A673 (cell line): ENCODE measurements at regions of chr1 and their contacts with region 1.

Region 1: GRCh38 chr1:165928075-165928731 is 100.8 kb downstream of the UCK2 start:
- DNase-seq: peak; percentile 77
- H3K4me3 ChIP-seq: no peak overlapping the region
- H3K27ac ChIP-seq: no peak overlapping the region
- H3K4me1 ChIP-seq: no peaks in the 10 kb centered on the region
- H3K27me3 ChIP-seq: no peaks in the 10 kb centered on the region
- CTCF ChIP-seq: peak; percentile 81

Region 2: DNA sequence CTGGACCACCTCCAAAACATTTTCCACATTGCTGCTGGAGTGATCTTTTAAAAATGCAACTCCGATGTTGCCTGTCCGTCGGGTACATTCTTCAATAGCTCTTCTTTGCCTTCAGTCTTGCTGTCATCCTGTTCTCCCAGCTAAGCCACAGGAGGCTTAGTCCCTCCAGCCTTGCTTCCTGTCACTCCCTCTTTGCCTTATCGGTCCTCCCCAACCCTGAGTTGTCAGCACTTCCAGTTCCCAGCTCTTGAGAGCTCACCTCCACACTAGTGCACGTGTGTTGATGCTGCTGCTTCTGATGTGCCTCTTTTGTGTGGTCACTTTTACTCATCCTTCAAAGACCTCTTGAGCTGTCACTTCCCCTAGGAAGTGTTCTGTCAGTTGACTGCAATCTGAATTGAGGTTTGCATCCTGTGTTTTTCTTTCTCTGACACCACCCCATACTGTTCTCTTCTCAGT is 85.5 kb before region 1 on chr1:
- CTCF ChIA-PET with region 1: interaction called, 15 read pairs
- POLR2A ChIA-PET with region 1: no interaction called
- intact Hi-C with region 1: no loop called
- DNase-seq: peak; percentile 48
- H3K4me3 ChIP-seq: no peak overlapping the region
- H3K27ac ChIP-seq: peak overlapping the region; percentile 6
- H3K4me1 ChIP-seq: peaks cover 21% of the 10 kb centered on the region
- H3K27me3 ChIP-seq: no peaks in the 10 kb centered on the region
- CTCF ChIP-seq: no peak

Region 3: GRCh38 chr1:165914136-165914798 is 13.9 kb before region 1 on chr1:
- CTCF ChIA-PET with region 1: no interaction called
- POLR2A ChIA-PET with region 1: no interaction called
- intact Hi-C with region 1: no loop called
- DNase-seq: peak; percentile 79
- H3K4me3 ChIP-seq: no peak overlapping the region
- H3K27ac ChIP-seq: no peak overlapping the region
- H3K4me1 ChIP-seq: no peaks in the 10 kb centered on the region
- H3K27me3 ChIP-seq: no peaks in the 10 kb centered on the region
- CTCF ChIP-seq: peak; percentile 90

Region 4: DNA sequence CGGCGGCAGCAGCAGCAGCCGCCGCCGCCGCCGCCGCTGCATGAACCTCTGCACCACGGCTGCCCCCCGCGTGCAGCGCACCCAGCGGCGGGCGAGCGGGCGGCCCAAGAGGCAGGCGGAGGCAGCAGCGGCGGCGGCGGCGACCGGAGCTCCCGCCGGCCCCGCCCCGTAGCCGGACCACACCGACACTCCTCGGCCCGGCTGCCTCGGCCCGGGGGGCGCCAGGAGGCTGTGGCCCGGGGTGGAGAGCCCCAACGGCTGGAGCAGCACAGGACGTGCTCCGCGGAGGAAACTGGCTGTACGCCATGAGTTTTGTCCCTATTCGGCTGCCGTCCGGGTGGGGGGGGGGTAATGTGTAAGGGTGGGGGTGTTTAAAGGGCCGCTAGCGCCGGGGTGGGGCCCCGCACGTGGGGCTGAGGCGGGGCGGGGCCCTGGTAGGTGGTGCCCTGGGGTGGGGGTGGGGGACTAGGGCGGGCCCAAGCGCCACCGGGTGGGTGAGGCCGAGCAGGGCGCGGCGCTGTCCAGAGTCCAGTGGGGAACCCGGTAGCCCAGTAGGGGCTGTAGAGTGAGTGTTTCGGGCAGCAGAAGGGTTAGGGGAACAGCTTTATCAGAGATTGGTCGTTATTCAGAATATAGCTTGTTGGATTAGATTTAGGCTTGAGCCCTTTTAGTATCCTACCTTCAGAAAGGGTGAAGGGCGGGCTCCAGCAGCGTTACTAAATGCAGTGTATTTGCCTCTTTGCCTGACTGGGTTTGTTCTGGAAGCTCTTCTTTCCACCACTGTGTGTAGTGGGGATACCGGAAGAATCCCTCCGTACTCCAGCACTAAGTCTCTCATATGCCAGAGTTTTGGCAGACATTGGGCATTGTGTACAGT is 238.7 kb after region 1 on chr1 and contains the start of gene FAM78B:
- CTCF ChIA-PET with region 1: interaction called, 4 read pairs
- POLR2A ChIA-PET with region 1: no interaction called
- intact Hi-C with region 1: loop called (anchors 10 kb)
- DNase-seq: peak; percentile 79
- H3K4me3 ChIP-seq: peak within 1 kb of the TSS; percentile 58
- H3K27ac ChIP-seq: no peak within 1 kb of the TSS
- H3K4me1 ChIP-seq: peaks cover 12% of the 10 kb centered on the region
- H3K27me3 ChIP-seq: peaks cover 65% of the 10 kb centered on the region
- CTCF ChIP-seq: no peak; the same call in 1 of the 2 replicates
- total RNA-seq, gene FAM78B: 0.24 and 0.50 TPM in 2 replicates

Region 5: GRCh38 chr1:166432655-166433054 is 504.5 kb after region 1 on chr1:
- CTCF ChIA-PET with region 1: no interaction called
- POLR2A ChIA-PET with region 1: no interaction called
- intact Hi-C with region 1: loop called (anchors 1 kb)
- DNase-seq: no peak
- H3K4me3 ChIP-seq: no peak overlapping the region
- H3K27ac ChIP-seq: no peak overlapping the region
- H3K4me1 ChIP-seq: no peaks in the 10 kb centered on the region
- H3K27me3 ChIP-seq: no peaks in the 10 kb centered on the region
- CTCF ChIP-seq: no peak

Region 6: DNA sequence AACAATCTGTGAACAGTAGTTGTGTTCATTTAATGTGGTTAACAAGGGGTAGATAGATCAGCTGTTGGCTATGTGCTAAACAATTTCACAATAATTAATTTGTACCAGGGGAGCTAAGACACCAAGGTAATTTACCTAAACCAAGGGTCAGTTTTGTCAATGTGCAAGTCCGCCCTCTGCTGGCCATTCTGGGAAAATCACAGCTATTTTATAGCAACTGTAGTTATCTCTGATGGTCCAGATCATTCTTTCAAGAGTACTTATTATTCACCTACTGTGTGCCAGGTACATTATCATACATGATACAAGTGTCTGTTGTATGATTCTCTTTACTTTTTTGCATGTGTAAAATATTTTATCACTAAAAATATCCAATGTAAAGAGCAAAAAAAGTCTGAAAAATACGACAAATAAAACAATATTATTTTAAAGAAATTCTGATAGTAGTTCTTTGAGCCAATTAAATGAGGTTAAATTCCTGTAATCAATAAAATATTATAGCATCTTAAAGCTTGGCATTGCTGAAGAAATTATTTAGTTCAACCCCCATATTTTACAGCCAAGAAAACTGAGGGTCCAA is 550.9 kb after region 1 on chr1:
- CTCF ChIA-PET with region 1: interaction called, 14 read pairs
- POLR2A ChIA-PET with region 1: no interaction called
- intact Hi-C with region 1: loop called (anchors 1 kb)
- DNase-seq: peak; percentile 41
- H3K4me3 ChIP-seq: no peak overlapping the region
- H3K27ac ChIP-seq: no peak overlapping the region
- H3K4me1 ChIP-seq: no peaks in the 10 kb centered on the region
- H3K27me3 ChIP-seq: peaks cover 17% of the 10 kb centered on the region
- CTCF ChIP-seq: peak; percentile 86

Region 7: DNA sequence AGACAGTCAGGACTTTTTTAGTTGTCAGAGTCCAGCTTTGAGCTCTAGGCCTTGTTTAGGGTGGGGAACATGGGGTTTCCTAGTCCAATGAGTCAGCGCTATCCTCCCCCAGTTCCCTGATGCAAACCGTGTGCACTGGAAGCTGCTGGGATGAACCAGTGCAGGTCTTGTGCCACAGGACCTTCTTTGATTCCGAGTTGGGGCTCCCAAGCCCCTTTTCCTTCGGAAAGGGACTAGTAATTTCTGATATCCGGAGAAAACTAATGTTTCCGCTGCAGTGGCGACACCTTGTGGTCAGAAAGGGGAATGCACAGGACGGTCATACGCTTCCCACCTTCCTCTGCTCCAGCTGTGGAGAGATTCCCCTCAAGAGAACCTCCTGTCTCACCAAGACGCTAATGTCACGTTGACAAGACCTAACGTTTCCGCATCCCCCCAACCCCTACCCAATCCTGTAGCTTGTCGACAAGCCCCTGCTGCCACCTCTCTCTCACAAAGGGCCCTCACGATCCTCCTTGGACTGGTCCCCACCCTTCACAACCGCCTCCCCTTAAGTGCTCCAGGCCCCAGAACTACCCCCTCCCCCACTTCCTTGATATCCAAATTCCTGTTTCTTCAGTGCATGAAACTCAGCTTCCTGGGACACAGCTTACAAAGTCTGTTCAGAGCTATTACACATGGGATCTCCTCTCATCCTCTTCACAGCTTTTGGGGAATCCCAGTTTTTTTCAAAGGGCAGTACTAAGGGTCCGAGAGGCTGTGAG is 1131.0 kb after region 1 on chr1:
- CTCF ChIA-PET with region 1: no interaction called
- POLR2A ChIA-PET with region 1: no interaction called
- intact Hi-C with region 1: loop called (anchors 5 kb)
- DNase-seq: peak; percentile 84
- H3K4me3 ChIP-seq: no peak overlapping the region
- H3K27ac ChIP-seq: no peak overlapping the region
- H3K4me1 ChIP-seq: no peaks in the 10 kb centered on the region
- H3K27me3 ChIP-seq: no peaks in the 10 kb centered on the region
- CTCF ChIP-seq: peak; percentile 94